GM18951 (cell line): ENCODE measurements at regions of chr14 and their contacts with region 1.

Region 1: GRCh38 chr14:52299692-52300278 is 14.3 kb upstream of the PTGER2 start:
- POLR2A ChIP-seq: no peak

Region 2: DNA sequence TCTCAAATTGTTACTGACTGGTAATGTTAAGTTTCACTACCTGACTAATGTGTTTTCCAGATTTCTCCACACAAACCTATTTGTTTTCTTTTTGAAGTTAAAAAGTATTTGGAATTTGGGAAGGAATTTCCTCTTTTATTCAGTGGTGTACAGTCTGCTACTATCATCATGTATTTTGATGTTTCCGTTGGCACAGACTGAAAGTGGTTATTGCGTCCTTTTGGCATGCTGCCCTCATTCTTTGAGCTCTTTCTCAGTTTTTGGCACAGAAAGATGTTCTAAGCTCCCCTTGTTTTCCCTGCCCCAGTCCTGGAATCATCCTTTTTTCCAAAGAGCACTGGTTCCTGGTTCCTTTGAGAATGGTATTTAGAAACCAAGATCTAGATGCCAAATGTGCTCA is 341.8 kb before region 1 on chr14:
- in situ Hi-C with region 1: no loop called
- POLR2A ChIP-seq: no peak

Region 3: DNA sequence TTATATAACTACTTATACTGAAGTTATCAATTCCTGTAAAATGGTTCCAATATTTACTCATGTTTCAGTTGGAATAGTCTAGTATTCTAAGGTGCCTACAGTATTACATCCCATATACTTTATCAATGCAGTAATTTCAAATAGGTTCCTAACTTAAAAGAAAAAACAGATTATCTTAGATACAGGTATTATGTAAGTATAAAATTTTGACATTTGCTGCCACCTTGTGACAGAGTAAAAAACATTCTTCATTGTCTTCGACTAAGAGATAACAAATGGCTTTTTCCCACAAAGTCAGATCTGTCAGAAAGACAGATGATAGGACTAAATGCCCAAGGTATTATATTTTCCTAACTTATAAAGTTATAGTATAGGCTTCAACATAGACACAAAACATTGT is 173.8 kb after region 1 on chr14:
- in situ Hi-C with region 1: loop called (anchors 10 kb)
- POLR2A ChIP-seq: no peak

Region 4: GRCh38 chr14:52583544-52583943 is 283.8 kb after region 1 on chr14:
- in situ Hi-C with region 1: no loop called
- POLR2A ChIP-seq: no peak